Activated naive CD4-positive, alpha-beta T cell treated with anti-CD3 and anti-CD28 coated beads for 36 hours (primary cell): ENCODE measurements at regions of chr1 and their contacts with region 1.

Region 1: GRCh38 chr1:24186993-24187805 is at the start of gene IFNLR1:
- DNase-seq: peak; percentile 92
- H3K4me3 Mint-ChIP-seq: peak within 1 kb of the TSS; percentile 79
- H3K27ac Mint-ChIP-seq: peak within 1 kb of the TSS; percentile 18
- H3K4me1 Mint-ChIP-seq: peaks cover 50% of the 10 kb centered on the region
- H3K27me3 Mint-ChIP-seq: peaks cover 3% of the 10 kb centered on the region
- total RNA-seq, gene IFNLR1: 4.3 to 4.6 TPM

Region 2: GRCh38 chr1:24150234-24151174 is 36.7 kb before region 1 on chr1:
- CTCF ChIA-PET with region 1: interaction called, 12 read pairs
- intact Hi-C with region 1: loop called (anchors 1 kb)
- DNase-seq: peak; percentile 95
- H3K4me3 Mint-ChIP-seq: peak overlapping the region; percentile 63
- H3K27ac Mint-ChIP-seq: no peak overlapping the region
- H3K4me1 Mint-ChIP-seq: peaks cover 18% of the 10 kb centered on the region
- H3K27me3 Mint-ChIP-seq: peaks cover 32% of the 10 kb centered on the region

Region 3: DNA sequence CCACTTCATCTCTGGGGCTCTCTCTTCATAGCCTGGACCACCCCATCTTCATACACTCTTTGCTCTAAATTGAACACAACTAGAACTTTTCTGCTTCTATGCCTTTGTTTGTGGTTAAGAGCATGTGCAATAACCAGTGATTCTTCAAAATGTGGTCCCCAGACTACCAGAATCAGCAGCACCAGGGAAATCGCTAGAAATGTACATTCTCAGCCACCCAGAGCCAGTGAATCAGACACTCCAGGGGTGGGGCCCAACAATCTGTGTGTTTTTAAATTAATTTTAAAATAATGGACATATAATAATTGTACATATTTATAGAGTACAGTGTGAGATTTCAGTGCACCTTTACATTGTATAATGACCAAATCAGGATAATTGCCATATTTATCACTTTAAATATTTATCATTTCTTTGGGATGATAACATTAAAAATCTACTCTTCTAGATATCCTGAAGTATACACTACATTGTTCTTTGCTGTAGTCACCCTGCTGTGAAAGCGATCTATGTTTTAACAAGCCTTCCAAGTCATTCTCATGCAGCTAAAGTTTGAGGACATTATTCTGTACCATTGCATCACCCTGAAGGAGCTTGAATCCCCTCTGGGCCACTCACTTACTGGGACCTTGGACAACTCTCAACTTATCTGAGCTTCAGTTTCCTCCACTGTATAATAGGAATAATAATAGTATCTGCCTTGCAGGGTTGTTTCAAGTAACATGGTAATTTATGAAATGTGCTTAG is 142.8 kb after region 1 on chr1:
- CTCF ChIA-PET with region 1: no interaction called
- intact Hi-C with region 1: no loop called
- DNase-seq: no peak
- H3K4me3 Mint-ChIP-seq: no peak overlapping the region
- H3K27ac Mint-ChIP-seq: no peak overlapping the region
- H3K4me1 Mint-ChIP-seq: peaks cover 1% of the 10 kb centered on the region
- H3K27me3 Mint-ChIP-seq: peaks cover 25% of the 10 kb centered on the region